ENCODE measurements at regions of chr14 and their contacts with region 1.

Region 1: GRCh38 chr14:64764641-64765520 is 60.7 kb downstream of the PLEKHG3 start:
- DNase-seq: peak; percentile 78
- H3K4me3 Mint-ChIP-seq: peak overlapping the region; percentile 29
- H3K27ac Mint-ChIP-seq: no peak overlapping the region
- H3K4me1 Mint-ChIP-seq: peaks cover 44% of the 10 kb centered on the region
- H3K27me3 Mint-ChIP-seq: peaks cover 49% of the 10 kb centered on the region

Region 2: GRCh38 chr14:64349741-64350490 is 415.0 kb before region 1 on chr14:
- CTCF ChIA-PET with region 1: no interaction called
- DNase-seq: no peak
- H3K4me3 Mint-ChIP-seq: no peak overlapping the region
- H3K27ac Mint-ChIP-seq: no peak overlapping the region
- H3K4me1 Mint-ChIP-seq: no peaks in the 10 kb centered on the region
- H3K27me3 Mint-ChIP-seq: no peaks in the 10 kb centered on the region

Region 3: DNA sequence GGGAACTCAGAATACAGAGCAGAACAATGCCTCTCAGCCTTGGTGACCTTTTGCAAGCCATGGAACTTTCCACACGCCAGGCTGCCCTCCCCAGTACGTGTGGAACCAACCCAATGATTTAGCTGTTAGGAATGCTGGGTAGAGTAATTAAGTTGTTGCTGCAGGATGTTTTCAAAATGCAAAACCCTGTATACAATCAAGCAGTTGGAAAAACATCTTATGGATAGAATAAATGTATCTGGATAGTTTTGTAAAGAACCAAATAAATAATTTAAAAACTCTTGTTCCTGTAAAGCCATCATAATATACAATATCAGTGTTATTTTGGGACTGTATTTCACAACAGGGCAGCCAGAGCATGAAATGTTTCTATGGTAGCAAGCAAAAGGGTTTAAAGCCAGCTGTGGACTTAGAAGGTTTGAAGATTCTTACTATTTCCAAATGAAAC is 195.7 kb before region 1 on chr14:
- CTCF ChIA-PET with region 1: no interaction called
- DNase-seq: no peak
- H3K4me3 Mint-ChIP-seq: no peak overlapping the region
- H3K27ac Mint-ChIP-seq: no peak overlapping the region
- H3K4me1 Mint-ChIP-seq: no peaks in the 10 kb centered on the region
- H3K27me3 Mint-ChIP-seq: peaks cover 17% of the 10 kb centered on the region

Region 4: GRCh38 chr14:64671591-64671990 is 93.3 kb before region 1 on chr14:
- CTCF ChIA-PET with region 1: interaction called, 104 read pairs
- DNase-seq: no peak
- H3K4me3 Mint-ChIP-seq: no peak overlapping the region
- H3K27ac Mint-ChIP-seq: no peak overlapping the region
- H3K4me1 Mint-ChIP-seq: peaks cover 41% of the 10 kb centered on the region
- H3K27me3 Mint-ChIP-seq: peaks cover 38% of the 10 kb centered on the region

Region 5: GRCh38 chr14:64692189-64692985 is 72.5 kb before region 1 on chr14:
- CTCF ChIA-PET with region 1: interaction called, 14 read pairs
- DNase-seq: no peak
- H3K4me3 Mint-ChIP-seq: no peak overlapping the region
- H3K27ac Mint-ChIP-seq: no peak overlapping the region
- H3K4me1 Mint-ChIP-seq: peaks cover 37% of the 10 kb centered on the region
- H3K27me3 Mint-ChIP-seq: peaks cover 65% of the 10 kb centered on the region

Region 6: GRCh38 chr14:64748995-64749763 is 15.7 kb before region 1 on chr14:
- CTCF ChIA-PET with region 1: interaction called, 11 read pairs
- DNase-seq: no peak
- H3K4me3 Mint-ChIP-seq: no peak overlapping the region
- H3K27ac Mint-ChIP-seq: no peak overlapping the region
- H3K4me1 Mint-ChIP-seq: peaks cover 22% of the 10 kb centered on the region
- H3K27me3 Mint-ChIP-seq: peaks cover 46% of the 10 kb centered on the region

Region 7: DNA sequence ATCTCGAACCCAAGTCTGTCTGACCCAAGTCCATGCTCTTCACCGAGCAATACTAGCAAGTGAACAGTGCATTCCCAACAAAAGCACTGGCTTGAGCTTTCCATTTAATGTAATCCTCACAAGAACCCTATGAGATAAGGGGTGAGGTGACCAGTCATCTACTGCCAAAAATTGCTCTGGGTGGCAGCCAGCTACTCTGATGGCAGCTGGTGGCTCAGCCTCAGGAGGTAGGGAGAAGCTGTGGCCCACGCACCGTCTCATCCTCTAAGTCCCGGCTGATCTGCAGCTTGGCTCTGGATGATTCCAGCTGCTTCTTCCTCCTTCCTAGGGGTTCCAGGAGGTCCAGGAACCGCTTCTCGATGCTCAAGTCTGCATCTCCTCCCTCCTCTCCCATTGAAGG is 14.6 kb after region 1 on chr14:
- CTCF ChIA-PET with region 1: interaction called, 15 read pairs
- DNase-seq: no peak
- H3K4me3 Mint-ChIP-seq: no peak overlapping the region
- H3K27ac Mint-ChIP-seq: no peak overlapping the region
- H3K4me1 Mint-ChIP-seq: no peaks in the 10 kb centered on the region
- H3K27me3 Mint-ChIP-seq: peaks cover 21% of the 10 kb centered on the region

Region 8: GRCh38 chr14:64960762-64961278 is 195.9 kb after region 1 on chr14:
- CTCF ChIA-PET with region 1: no interaction called
- DNase-seq: no peak
- H3K4me3 Mint-ChIP-seq: no peak overlapping the region
- H3K27ac Mint-ChIP-seq: no peak overlapping the region
- H3K4me1 Mint-ChIP-seq: no peaks in the 10 kb centered on the region
- H3K27me3 Mint-ChIP-seq: no peaks in the 10 kb centered on the region

Measured in activated naive CD4-positive, alpha-beta T cell treated with anti-CD3 and anti-CD28 coated beads, Interleukin-2, amount 10 ng/mL, durations not matched to agents 7 days and 5 days (primary cell).